Heart left ventricle (tissue), 16 donors: ENCODE measurements at regions of chr3 and their contacts with region 1.

Region 1: DNA sequence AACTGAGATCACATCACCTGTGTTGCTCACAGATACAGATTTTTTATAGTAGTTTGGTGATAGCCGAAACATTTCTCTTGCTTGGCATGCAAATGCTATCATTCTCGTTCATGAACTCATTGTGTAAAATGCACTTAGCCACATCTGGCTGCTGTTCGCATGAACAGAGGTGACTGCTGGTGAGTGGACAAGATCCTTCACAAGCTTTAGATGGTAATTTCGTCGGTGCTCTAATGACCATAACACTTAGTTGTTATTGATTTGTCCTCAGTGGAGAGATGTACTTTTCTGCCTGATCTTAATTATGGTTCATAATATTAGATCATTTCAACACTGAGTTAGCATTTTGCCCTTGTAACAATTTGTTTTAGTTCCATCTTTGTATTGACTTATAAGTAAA is 13.8 kb downstream of the LRRN1 start:
- DNase-seq: no peak
- ATAC-seq: no peak
- H3K4me3 ChIP-seq: no peak overlapping the region
- H3K27ac ChIP-seq: no peak overlapping the region
- H3K4me1 ChIP-seq: no peaks in the 10 kb centered on the region
- H3K27me3 ChIP-seq: peaks cover 0 to 5% (median 0%) of the 10 kb centered on the region in 9 donors
- CTCF ChIP-seq: no peak
- POLR2A ChIP-seq: no peak

Region 2: DNA sequence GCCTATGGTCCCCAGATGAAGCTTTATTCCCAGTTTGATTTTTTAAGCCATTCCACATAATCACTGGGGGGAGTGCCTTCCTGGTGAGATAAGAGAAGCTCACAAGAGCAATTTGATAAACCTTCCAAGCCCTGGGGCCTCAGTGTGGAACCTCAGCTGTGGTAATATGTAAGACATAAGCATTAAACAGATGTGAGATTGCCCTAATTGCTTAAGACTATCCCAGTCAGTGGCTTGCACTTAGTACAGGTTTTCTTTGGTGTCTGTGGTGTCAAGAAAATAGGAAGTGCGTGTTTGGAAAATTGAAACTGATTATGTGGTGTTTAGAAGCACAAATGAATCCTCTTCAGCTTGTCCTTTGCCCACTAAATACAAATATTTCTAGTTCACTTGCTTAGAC is 40.5 kb after region 1 on chr3:
- intact Hi-C with region 1: loop called in 1 of 10 experiments (anchors 2 kb)
- DNase-seq: no peak
- ATAC-seq: no peak
- H3K4me3 ChIP-seq: no peak overlapping the region
- H3K27ac ChIP-seq: no peak overlapping the region
- H3K4me1 ChIP-seq: no peaks in the 10 kb centered on the region
- H3K27me3 ChIP-seq: no peaks in the 10 kb centered on the region
- CTCF ChIP-seq: no peak
- POLR2A ChIP-seq: no peak

Region 3: GRCh38 chr3:3907023-3907422 is 94.0 kb after region 1 on chr3:
- intact Hi-C with region 1: no loop called
- DNase-seq: no peak
- ATAC-seq: no peak
- H3K4me3 ChIP-seq: no peak overlapping the region
- H3K27ac ChIP-seq: no peak overlapping the region
- H3K4me1 ChIP-seq: no peaks in the 10 kb centered on the region
- H3K27me3 ChIP-seq: no peaks in the 10 kb centered on the region
- CTCF ChIP-seq: no peak
- POLR2A ChIP-seq: no peak